ENCODE measurements at regions of chr4 and their contacts with region 1.

Region 1: DNA sequence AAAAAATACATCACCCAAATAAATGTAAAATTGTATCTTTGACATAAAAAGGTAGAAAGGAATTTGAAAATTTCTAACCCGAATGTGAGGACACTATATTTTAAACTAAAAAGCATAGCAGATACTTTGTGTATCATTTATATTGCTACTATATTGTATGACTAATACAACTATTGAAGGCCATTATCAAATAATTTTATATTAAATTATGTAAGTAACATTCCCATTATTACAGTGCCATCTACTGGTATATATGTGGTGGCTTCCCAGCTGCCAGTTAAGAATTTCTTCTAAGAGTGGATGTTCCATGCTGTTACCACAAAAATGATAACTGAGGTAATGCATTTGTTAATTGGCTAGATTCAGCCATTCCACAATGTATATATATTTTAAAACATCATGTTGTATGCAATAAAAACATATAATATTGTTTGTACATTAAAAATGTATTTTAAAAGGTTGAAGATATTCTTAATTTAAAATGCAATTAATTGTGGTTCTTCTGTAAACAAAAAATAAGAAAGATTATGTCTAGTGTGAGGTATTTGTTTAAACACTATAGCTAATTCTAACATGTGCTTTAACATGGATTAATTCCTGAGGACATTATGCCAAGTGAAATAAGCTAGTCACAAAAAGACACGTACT is 65.3 kb downstream of the EGF start:
- DNase-seq: no peak
- ATAC-seq: no peak
- H3K4me3 Mint-ChIP-seq: no peak overlapping the region
- H3K27ac Mint-ChIP-seq: no peak overlapping the region
- H3K4me1 Mint-ChIP-seq: no peaks in the 10 kb centered on the region
- H3K27me3 Mint-ChIP-seq: peaks cover 7% of the 10 kb centered on the region
- CTCF ChIP-seq: peak; percentile 51

Region 2: DNA sequence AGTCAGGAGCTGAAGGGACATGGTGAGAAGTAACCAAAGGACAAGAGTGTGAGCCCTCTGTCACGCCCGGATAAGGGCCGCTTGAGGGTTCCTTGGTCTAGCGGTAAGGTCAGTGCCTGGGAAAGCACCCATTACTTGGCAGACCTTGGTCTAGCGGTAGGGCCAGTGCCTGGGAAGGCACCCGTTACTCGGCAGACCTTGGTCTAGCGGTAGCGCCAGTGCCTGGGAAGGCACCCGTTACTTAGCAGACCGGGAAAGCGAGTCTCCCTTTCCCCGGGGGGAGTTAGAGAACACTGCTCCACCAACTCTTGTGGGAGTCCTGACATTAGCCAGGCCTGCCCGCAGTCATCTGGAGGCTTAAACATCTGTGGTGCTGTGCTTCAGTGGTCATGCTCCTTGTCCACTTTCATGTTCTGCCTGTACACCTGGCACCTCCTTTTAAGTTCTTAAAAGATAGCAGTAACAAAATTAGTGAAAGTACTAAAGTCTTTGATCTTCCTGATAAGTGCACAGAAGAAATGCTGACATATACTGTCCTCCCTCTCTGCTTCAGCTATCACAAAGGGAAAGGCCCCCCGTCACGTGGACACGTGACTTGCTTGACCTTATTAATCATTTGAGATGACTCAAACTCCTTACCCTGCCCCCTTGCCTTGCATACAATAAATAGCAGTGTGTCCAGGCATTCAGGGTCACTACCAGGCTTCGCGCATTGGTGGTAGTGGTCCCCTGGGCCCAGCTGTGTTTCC is 553.7 kb before region 1 on chr4:
- CTCF ChIA-PET with region 1: interaction called, 7 read pairs
- POLR2A ChIA-PET with region 1: no interaction called
- intact Hi-C with region 1: loop called (anchors 2 kb)
- DNase-seq: no peak
- ATAC-seq: no peak
- H3K4me3 Mint-ChIP-seq: no peak overlapping the region
- H3K27ac Mint-ChIP-seq: no peak overlapping the region
- H3K4me1 Mint-ChIP-seq: peaks cover 5% of the 10 kb centered on the region
- H3K27me3 Mint-ChIP-seq: no peaks in the 10 kb centered on the region
- CTCF ChIP-seq: no peak

Region 3: GRCh38 chr4:109877400-109877799 is 100.6 kb before region 1 on chr4:
- CTCF ChIA-PET with region 1: no interaction called
- POLR2A ChIA-PET with region 1: no interaction called
- intact Hi-C with region 1: loop called (anchors 5 kb)
- DNase-seq: no peak
- ATAC-seq: no peak
- H3K4me3 Mint-ChIP-seq: no peak overlapping the region
- H3K27ac Mint-ChIP-seq: no peak overlapping the region
- H3K4me1 Mint-ChIP-seq: no peaks in the 10 kb centered on the region
- H3K27me3 Mint-ChIP-seq: peaks cover 6% of the 10 kb centered on the region
- CTCF ChIP-seq: no peak

Region 4: GRCh38 chr4:109912706-109913595 is 65.0 kb before region 1 on chr4 and contains the start of gene EGF:
- CTCF ChIA-PET with region 1: no interaction called
- POLR2A ChIA-PET with region 1: no interaction called
- intact Hi-C with region 1: no loop called
- DNase-seq: no peak
- ATAC-seq: no peak
- H3K4me3 Mint-ChIP-seq: no peak within 1 kb of the TSS
- H3K27ac Mint-ChIP-seq: no peak within 1 kb of the TSS
- H3K4me1 Mint-ChIP-seq: no peaks in the 10 kb centered on the region
- H3K27me3 Mint-ChIP-seq: peaks cover 10% of the 10 kb centered on the region
- CTCF ChIP-seq: no peak
- total RNA-seq, gene EGF: not detected

Region 5: DNA sequence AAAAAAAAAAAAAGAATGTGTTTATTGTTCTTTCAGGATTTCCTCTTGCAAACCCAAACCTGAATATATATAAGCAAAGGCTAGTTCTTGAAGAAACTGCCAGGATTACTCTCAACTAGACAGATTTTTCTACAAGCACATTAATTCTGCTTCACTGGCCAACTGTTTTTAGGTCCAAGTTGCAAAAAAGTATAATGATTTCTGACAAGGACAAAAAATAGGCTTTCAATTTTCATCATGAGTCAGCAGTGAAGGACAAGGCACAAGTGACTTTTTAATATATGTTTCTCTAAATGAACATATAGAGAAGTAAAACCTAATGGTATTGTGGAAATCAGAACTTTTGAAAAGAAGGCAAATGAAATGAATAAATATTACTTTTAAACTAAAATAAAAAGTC is 146.7 kb after region 1 on chr4:
- CTCF ChIA-PET with region 1: no interaction called
- POLR2A ChIA-PET with region 1: no interaction called
- intact Hi-C with region 1: no loop called
- DNase-seq: no peak
- ATAC-seq: no peak
- H3K4me3 Mint-ChIP-seq: no peak overlapping the region
- H3K27ac Mint-ChIP-seq: no peak overlapping the region
- H3K4me1 Mint-ChIP-seq: peaks cover 11% of the 10 kb centered on the region
- H3K27me3 Mint-ChIP-seq: no peaks in the 10 kb centered on the region
- CTCF ChIP-seq: no peak